ENCODE measurements at regions of chr1 and their contacts with region 1.

Region 1: GRCh38 chr1:234454926-234455325 is 24.1 kb downstream of the TARBP1 start:
- DNase-seq: no peak
- H3K4me3 ChIP-seq: no peak overlapping the region
- H3K27ac ChIP-seq: no peak overlapping the region
- H3K27me3 ChIP-seq: no peaks in the 10 kb centered on the region
- CTCF ChIP-seq: no peak

Region 2: GRCh38 chr1:233805786-233806185 is 649.1 kb before region 1 on chr1:
- intact Hi-C with region 1: no loop called
- DNase-seq: no peak
- H3K4me3 ChIP-seq: no peak overlapping the region
- H3K27ac ChIP-seq: no peak overlapping the region
- H3K27me3 ChIP-seq: no peaks in the 10 kb centered on the region
- CTCF ChIP-seq: no peak

Region 3: DNA sequence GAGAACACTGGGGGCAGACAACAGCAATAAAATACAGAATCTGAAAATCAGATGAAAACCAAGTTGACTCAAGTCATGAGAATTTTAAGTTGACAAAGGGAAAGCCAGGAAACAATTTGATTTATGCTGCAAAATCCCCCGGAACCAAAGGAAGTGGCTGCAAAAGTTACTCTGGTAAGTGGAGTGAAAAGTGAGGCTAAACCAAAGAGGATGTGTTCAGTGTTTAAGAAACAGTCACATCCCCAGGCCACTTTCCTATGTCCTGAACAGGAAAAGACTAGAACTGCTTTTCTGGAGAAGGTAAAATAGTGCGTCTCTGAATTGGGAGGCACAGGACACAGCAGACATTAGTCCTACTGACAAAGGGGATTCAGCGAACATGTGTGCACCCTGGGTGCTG is 18.2 kb after region 1 on chr1:
- intact Hi-C with region 1: loop called in 1 of 2 experiments (anchors 2 kb)
- DNase-seq: no peak
- H3K4me3 ChIP-seq: no peak overlapping the region
- H3K27ac ChIP-seq: no peak overlapping the region
- H3K27me3 ChIP-seq: no peaks in the 10 kb centered on the region
- CTCF ChIP-seq: no peak

Region 4: GRCh38 chr1:235128456-235129328 is 673.8 kb after region 1 on chr1 and contains the start of gene TOMM20:
- intact Hi-C with region 1: no loop called
- DNase-seq: peak; percentile 93 to 97 (median 95)
- H3K4me3 ChIP-seq: peak within 1 kb of the TSS; percentile 67 to 100 (median 93)
- H3K27ac ChIP-seq: peak within 1 kb of the TSS; percentile 42 to 94 (median 89)
- H3K27me3 ChIP-seq: no peaks in the 10 kb centered on the region
- CTCF ChIP-seq: peak in 49 of 56 donors; percentile 3 to 63 (median 38)
- total RNA-seq, gene TOMM20: 96.2 to 291 (median 209) TPM